ENCODE measurements at regions of chr11 and their contacts with region 1.

Region 1: DNA sequence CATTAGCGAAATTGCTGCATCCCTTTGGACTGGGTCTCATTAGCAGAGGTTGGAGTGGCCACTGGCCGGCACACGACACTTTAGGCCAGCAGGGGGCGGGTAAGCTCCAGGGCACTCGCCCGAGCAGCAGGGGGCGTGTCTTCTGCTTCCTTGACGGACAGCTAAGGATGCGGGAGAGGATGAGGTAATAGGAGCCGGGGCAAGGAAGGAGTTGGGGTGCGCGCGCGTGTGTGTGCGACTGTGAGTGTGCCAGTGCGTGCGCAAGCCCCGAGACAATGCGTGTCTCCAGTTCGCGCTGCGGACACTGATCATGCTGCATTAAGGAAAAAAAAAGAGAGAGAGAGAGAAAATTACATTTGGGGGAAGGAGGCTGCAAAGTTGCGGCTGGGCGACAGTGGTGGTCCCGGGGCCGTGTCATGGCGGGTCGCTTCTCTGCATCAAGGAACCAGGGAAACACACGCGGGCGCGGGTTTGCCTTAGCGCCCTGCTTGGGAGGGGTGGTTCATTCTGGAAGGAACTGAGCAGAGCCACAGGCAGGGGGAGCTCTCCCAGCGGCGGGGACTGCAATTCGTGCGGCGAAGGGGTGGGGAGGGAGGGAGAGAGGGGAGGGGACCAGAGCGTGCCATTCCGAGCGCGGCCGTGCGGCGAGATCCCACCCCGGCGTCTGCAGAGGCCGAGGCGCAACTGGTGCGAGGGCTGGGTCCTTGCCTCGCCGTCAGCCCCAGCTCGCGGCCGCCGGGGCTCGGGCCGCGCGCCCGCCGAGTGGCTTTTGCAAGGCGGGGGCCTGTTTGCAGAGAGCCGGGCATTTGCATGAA is at the start of gene DTX4:
- DNase-seq: no peak
- H3K4me3 ChIP-seq: peak within 1 kb of the TSS; percentile 70
- CTCF ChIP-seq: peak; percentile 99

Region 2: GRCh38 chr11:59040607-59041006 is 131.1 kb before region 1 on chr11:
- CTCF ChIA-PET with region 1: no interaction called
- POLR2A ChIA-PET with region 1: no interaction called
- DNase-seq: no peak
- H3K4me3 ChIP-seq: no peak overlapping the region
- CTCF ChIP-seq: no peak

Region 3: GRCh38 chr11:59158206-59159068 is 13.3 kb before region 1 on chr11:
- CTCF ChIA-PET with region 1: interaction called, 103 read pairs
- POLR2A ChIA-PET with region 1: no interaction called
- DNase-seq: no peak
- H3K4me3 ChIP-seq: no peak overlapping the region
- CTCF ChIP-seq: peak; percentile 63

Region 4: GRCh38 chr11:59207988-59208451 is 36.3 kb after region 1 on chr11:
- CTCF ChIA-PET with region 1: interaction called, 450 read pairs
- POLR2A ChIA-PET with region 1: no interaction called
- DNase-seq: peak; percentile 21
- H3K4me3 ChIP-seq: no peak overlapping the region
- CTCF ChIP-seq: peak; percentile 68

Region 5: GRCh38 chr11:59224351-59224928 is 52.7 kb after region 1 on chr11:
- CTCF ChIA-PET with region 1: interaction called, 43 read pairs
- POLR2A ChIA-PET with region 1: interaction called, 4 read pairs
- DNase-seq: no peak
- H3K4me3 ChIP-seq: no peak overlapping the region
- CTCF ChIP-seq: no peak

Region 6: DNA sequence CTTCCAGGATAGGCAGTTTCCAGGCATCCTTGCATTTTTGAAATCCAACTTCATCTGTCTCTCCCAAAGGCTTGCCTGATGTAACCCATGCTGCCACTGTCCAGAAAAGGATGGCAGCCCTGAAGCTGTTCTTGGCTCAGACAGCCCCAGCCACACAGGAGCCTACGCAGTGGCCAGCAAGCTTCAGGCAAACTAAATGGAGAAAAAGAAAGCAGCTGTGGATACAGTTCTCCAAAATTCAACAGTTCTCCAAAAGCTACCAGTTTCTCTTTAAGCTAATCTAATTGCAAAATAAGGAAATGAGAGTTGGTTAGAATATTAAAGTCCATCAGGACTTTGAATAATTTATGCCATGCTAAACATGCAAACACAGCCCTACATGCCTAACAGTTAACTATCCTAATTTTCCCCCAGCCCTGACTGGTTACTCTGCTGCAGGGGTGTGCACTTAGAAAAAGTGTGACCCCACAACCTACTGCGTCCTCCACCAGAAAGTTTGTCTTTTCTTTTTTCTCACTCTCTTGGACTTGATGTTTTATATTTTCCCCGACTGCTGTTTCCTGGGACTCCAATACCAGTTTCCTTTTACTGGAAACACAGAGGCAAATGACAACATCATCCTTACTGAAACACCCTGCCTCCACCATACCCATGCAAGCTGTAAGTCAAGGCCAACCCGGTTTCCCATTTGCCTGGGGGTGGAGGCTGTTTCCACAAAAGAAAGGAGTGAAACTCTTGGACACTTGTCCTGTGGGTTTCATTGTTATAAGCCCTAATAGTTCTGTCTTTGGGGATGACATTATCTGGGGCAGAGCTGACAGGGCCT is 117.9 kb after region 1 on chr11:
- CTCF ChIA-PET with region 1: interaction called, 17 read pairs
- POLR2A ChIA-PET with region 1: no interaction called
- DNase-seq: no peak
- H3K4me3 ChIP-seq: no peak overlapping the region
- CTCF ChIP-seq: no peak

Region 7: DNA sequence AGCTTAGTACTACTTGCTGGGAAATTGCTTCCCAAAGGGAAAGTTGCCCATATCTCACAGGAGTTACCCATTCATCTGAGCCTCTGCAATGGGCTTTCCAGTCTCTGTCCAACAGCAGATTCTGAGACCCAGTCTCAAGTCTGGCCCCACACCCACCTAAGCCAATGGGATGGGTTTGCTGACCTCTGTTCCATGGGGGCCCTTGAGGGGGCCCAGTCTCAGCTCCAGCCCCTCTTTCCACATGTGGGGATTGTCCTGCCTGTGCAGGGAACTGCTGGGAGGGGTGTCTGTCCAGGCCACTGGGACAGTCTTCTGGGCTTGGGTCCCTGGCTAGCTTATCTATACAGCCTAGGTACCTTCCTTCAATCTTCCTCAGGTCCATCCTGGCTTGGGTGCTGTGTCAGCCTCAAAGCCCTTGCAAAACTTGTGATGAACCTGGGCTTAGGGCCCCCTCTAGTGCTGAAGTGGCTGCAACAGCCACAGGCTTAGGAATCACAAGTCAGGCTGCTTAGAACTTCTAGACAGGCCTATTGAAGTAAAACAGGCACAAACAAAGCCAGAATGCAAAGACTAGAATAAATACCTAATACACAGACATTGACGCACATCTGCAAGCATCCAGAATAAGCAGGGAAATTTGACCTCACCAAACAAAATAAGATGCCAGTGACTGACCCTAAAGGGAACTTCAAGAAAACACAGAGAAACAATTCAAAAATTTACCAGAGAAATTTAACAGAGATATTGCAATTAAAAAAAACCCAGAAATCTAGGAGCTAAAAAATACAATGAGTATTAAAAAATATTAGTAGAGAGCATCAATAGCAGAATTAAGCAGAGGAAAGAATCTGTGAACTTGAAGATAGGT is 508.8 kb after region 1 on chr11:
- CTCF ChIA-PET with region 1: interaction called, 12 read pairs
- POLR2A ChIA-PET with region 1: no interaction called
- DNase-seq: peak; percentile 31
- H3K4me3 ChIP-seq: no peak overlapping the region
- CTCF ChIP-seq: peak; percentile 87